ENCODE measurements at regions of chr6 and their contacts with region 1.

Region 1: DNA sequence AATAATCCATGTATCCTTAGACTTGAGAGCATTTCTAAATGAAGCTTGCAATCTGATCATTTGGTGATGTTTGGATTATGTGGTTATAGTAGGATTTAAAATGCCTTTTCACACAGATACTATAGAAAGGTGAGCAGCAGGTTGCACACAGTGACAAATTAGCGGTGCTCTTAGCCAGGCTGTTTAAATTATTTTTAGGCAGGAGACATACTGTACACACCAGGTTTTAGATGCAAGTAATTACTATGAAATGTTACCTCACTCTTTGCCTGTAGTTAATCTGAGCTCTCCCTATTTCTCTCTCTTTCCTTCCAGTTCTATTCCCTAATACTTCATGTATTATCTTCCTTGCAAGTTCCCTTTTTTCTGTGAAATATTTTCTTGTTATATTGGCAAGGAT is 191.7 kb downstream of the RIMS1 start:
- DNase-seq: no peak
- ATAC-seq: no peak

Region 2: DNA sequence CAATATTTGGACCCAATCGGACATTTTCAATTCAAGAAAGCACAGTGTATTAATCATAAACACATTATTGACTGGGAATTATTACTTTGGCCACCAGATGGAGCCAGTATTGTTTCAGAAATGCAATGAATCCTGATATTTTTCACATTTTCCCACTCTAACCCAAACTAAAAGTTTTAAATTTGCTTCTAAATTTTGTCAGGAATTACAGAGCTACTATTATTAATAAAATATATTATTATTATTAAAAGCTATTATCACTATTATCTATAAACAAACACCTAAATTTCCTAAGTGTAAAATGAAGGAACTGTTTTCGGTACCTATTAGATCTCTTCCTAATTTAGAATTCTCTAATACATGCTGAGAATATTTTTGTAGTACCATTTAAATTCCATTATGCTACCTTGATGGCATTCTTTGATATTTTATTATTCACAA is 544.1 kb before region 1 on chr6:
- intact Hi-C with region 1: loop called (anchors 10 kb)
- DNase-seq: no peak
- ATAC-seq: no peak

Region 3: DNA sequence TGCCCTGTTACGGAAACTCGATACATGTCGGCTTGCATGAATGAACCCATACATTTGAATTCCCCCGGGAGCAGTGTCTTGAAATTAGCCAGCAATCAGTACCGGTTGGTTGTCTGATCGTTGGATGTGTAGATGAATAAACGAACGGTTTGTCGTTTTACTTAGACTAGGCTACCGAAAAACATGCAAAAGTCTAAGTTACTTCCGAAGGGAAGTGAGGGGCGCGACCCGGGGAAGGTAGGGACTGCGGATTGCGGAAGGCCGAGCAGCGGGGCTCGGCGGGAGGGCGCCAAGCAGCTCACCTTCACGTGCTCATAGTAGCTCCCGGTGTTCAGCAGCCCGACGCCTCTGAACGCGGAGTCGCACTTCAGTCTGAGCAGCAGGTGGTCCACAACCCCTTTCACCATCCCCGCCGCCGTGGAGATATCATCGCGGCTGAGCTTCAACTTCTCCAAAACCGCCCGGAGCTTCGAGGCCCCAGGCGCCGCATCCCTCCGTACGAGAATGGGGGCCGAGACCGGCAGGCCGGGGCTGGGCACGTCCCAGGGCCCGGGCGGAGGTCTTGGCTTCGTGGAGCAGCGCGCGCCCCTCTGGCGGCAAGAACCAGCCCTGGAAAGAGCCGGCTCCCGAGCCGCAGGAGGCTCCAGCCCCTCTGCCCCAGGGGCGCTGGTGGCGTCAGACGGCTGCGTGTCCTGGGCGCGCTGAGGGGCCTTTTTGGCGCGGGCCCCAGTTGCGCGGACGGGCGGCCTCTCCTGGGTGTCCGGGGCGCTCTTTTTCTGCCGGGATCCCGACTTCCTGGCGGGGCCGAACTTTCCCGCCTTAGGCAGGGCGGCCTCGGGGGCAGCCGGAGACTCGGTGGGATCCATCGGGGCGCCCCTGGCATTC is 1373.4 kb after region 1 on chr6:
- intact Hi-C with region 1: no loop called
- DNase-seq: peak; percentile 66
- ATAC-seq: peak; percentile 77

Measured in sciatic nerve (tissue), 2 donors.